Activated T-helper 2 cell treated with anti-CD3 and anti-CD28 coated beads, Interferon-gamma antibody, Interleukin-2, Interleukin-4, amounts not matched to agents 10 μg/mL and 5 μg/mL and 100 μg/mL, durations not matched to agents 14 hours and 24 hours and 36 hours (primary cell): ENCODE measurements at regions of chr6 and their contacts with region 1.

Region 1: GRCh38 chr6:166417285-166417691 is 34.5 kb upstream of the MPC1 start:
- DNase-seq: peak; percentile 36
- H3K4me3 Mint-ChIP-seq: no peak overlapping the region
- H3K27ac Mint-ChIP-seq: peak overlapping the region; percentile 60
- H3K4me1 Mint-ChIP-seq: peaks cover 67% of the 10 kb centered on the region
- H3K27me3 Mint-ChIP-seq: no peaks in the 10 kb centered on the region

Region 2: GRCh38 chr6:166488076-166488685 is 70.9 kb after region 1 on chr6:
- intact Hi-C with region 1: loop called (anchors 1 kb)
- DNase-seq: peak; percentile 68
- H3K4me3 Mint-ChIP-seq: peak overlapping the region; percentile 63
- H3K27ac Mint-ChIP-seq: peak overlapping the region; percentile 90
- H3K4me1 Mint-ChIP-seq: peaks cover 13% of the 10 kb centered on the region
- H3K27me3 Mint-ChIP-seq: no peaks in the 10 kb centered on the region

Region 3: GRCh38 chr6:166619912-166620311 is 202.6 kb after region 1 on chr6:
- intact Hi-C with region 1: no loop called
- DNase-seq: no peak
- H3K4me3 Mint-ChIP-seq: no peak overlapping the region
- H3K27ac Mint-ChIP-seq: no peak overlapping the region
- H3K4me1 Mint-ChIP-seq: no peaks in the 10 kb centered on the region
- H3K27me3 Mint-ChIP-seq: peaks cover 19% of the 10 kb centered on the region